ENCODE measurements at regions of chr9 and their contacts with region 1.

Region 1: GRCh38 chr9:6645355-6646292 is at the start of gene GLDC:
- DNase-seq: peak; percentile 41 to 69
- ATAC-seq: peak; percentile 89 to 91
- H3K4me3 ChIP-seq: peak within 1 kb of the TSS; percentile 53 to 65 (median 59)
- H3K27ac ChIP-seq: peak within 1 kb of the TSS; percentile 28 to 61 (median 58)
- H3K4me1 ChIP-seq: peaks cover 6 to 7% of the 10 kb centered on the region in 2 donors
- H3K27me3 ChIP-seq: peaks cover 0 to 22% (median 12%) of the 10 kb centered on the region in 3 donors
- CTCF ChIP-seq: no peak
- POLR2A ChIP-seq: peak; percentile 29 to 37
- total RNA-seq, gene GLDC: 0.31 to 1.00 (median 0.47) TPM

Region 2: GRCh38 chr9:6412487-6413364 is 232.9 kb before region 1 on chr9 and contains the start of gene UHRF2:
- in situ Hi-C with region 1: no loop called
- intact Hi-C with region 1: loop called (anchors 2 kb)
- DNase-seq: peak; percentile 96 to 98
- ATAC-seq: peak; percentile 95 to 96
- H3K4me3 ChIP-seq: peak within 1 kb of the TSS; percentile 80 to 86 (median 84)
- H3K27ac ChIP-seq: peak within 1 kb of the TSS; percentile 80 to 86 (median 83)
- H3K4me1 ChIP-seq: peaks cover 18 to 21% of the 10 kb centered on the region in 2 donors
- H3K27me3 ChIP-seq: no peaks in the 10 kb centered on the region
- CTCF ChIP-seq: peak in 1 of 5 experiments; percentile 15
- POLR2A ChIP-seq: peak; percentile 62 to 89
- total RNA-seq, gene UHRF2: 16.7 to 29.0 (median 18.8) TPM

Region 3: GRCh38 chr9:6733257-6733656 is 87.6 kb after region 1 on chr9:
- in situ Hi-C with region 1: no loop called
- intact Hi-C with region 1: no loop called
- DNase-seq: no peak
- ATAC-seq: no peak
- H3K4me3 ChIP-seq: no peak overlapping the region
- H3K27ac ChIP-seq: no peak overlapping the region
- H3K4me1 ChIP-seq: no peaks in the 10 kb centered on the region
- H3K27me3 ChIP-seq: no peaks in the 10 kb centered on the region
- CTCF ChIP-seq: no peak
- POLR2A ChIP-seq: no peak